ENCODE measurements at regions of chr1 and their contacts with region 1.

Region 1: DNA sequence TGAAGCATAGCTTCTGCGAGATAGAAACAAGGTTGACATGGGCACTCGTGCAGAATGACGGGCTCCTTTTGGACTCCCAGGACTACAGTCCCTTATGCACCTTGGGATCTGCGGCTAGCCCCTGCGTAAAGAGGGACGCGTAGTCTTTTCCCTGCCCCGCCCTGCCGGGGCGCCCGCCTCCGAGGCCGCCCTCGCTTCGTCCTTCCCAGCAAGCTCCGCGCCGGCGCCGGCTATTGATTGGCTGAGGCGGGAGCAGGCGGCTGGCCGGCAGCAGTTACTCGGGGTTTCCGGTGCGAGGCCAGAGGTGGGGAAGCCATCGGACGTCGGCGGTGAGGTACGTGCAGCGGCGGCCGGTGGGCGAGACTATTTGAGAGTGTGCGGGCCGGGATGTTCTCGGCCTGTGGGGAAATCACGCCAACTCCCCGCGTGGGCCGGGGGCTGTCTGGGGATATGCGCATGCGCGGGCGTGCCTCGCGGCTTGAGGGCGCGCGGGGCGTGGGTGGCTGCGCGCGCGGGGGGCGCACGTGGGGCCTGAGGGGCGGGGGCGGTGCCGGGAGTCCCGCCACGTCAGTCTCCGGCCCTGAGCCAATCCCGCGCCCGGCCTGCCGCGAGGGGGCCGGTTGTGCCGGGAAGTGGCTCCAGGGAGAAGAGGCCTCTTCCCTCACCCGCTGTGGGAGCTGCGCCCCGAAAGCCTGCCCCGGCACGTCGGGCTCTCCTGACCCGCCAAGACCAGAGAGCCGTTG is at the start of gene TXLNA:
- DNase-seq: peak; percentile 68
- H3K4me3 ChIP-seq: peak within 1 kb of the TSS; percentile 81
- H3K27ac ChIP-seq: peak within 1 kb of the TSS; percentile 97
- H3K27me3 ChIP-seq: no peaks in the 10 kb centered on the region
- CTCF ChIP-seq: no peak
- polyA plus RNA-seq, gene TXLNA: 49.3 and 52.8 TPM in 2 replicates

Region 2: GRCh38 chr1:32107742-32108661 is 71.6 kb before region 1 on chr1 and contains the start of gene KPNA6:
- CTCF ChIA-PET with region 1: interaction called, 6 read pairs
- POLR2A ChIA-PET with region 1: interaction called, 19 read pairs
- DNase-seq: peak; percentile 92
- H3K4me3 ChIP-seq: peak within 1 kb of the TSS; percentile 98
- H3K27ac ChIP-seq: peak within 1 kb of the TSS; percentile 89
- H3K27me3 ChIP-seq: no peaks in the 10 kb centered on the region
- CTCF ChIP-seq: no peak
- polyA plus RNA-seq, gene KPNA6: 45.9 and 54.4 TPM in 2 replicates

Region 3: GRCh38 chr1:32200226-32201010 is 20.8 kb after region 1 on chr1 and contains the start of gene CCDC28B:
- CTCF ChIA-PET with region 1: interaction called, 4 read pairs
- POLR2A ChIA-PET with region 1: interaction called, 13 read pairs
- DNase-seq: no peak
- H3K4me3 ChIP-seq: peak within 1 kb of the TSS; percentile 79
- H3K27ac ChIP-seq: peak within 1 kb of the TSS; percentile 96
- H3K27me3 ChIP-seq: no peaks in the 10 kb centered on the region
- CTCF ChIP-seq: no peak
- polyA plus RNA-seq, gene CCDC28B: 17.6 and 20.8 TPM in 2 replicates

Region 4: GRCh38 chr1:32205401-32206370 is 26.1 kb after region 1 on chr1 and contains the start of gene IQCC:
- CTCF ChIA-PET with region 1: interaction called, 4 read pairs
- POLR2A ChIA-PET with region 1: interaction called, 13 read pairs
- DNase-seq: no peak
- H3K4me3 ChIP-seq: peak within 1 kb of the TSS; percentile 80
- H3K27ac ChIP-seq: peak within 1 kb of the TSS; percentile 39
- H3K27me3 ChIP-seq: no peaks in the 10 kb centered on the region
- CTCF ChIP-seq: no peak
- polyA plus RNA-seq, gene IQCC: 1.2 and 1.3 TPM in 2 replicates